ENCODE measurements at regions of chr2 and their contacts with region 1.

Region 1: DNA sequence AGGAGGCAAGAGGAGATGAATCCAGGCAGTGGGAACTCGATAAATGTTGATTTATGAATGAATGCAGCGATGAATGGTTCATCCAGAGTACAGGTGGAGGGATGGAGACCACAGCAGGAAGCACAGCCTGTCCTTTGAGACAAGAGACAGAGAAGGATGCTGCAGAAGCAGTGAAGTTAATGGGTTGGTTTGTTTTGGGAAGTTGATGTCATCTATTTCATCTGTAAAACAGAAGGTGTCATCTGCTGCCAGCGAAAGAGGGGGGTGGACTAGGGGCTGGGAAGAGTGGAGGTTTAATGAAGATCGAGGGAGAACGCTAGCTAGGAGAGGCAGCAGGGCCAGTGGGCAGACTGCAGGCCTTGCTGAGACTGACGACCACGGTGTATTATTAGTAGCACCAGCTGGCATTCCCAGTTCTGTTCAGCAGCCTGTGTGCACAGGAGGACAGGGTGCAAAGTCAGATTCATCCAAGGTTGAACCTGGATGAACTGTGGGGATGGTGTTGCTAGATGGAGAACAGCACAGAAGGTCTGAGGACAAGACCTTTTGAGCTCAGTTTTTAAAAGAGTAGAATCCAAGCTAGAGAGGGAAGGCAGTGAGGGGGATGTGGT is 120.3 kb upstream of the CAPN13 start:
- DNase-seq: no peak
- H3K4me3 ChIP-seq: no peak overlapping the region
- H3K27ac ChIP-seq: no peak overlapping the region
- H3K4me1 ChIP-seq: no peaks in the 10 kb centered on the region
- H3K27me3 ChIP-seq: no peaks in the 10 kb centered on the region
- CTCF ChIP-seq: no peak

Region 2: DNA sequence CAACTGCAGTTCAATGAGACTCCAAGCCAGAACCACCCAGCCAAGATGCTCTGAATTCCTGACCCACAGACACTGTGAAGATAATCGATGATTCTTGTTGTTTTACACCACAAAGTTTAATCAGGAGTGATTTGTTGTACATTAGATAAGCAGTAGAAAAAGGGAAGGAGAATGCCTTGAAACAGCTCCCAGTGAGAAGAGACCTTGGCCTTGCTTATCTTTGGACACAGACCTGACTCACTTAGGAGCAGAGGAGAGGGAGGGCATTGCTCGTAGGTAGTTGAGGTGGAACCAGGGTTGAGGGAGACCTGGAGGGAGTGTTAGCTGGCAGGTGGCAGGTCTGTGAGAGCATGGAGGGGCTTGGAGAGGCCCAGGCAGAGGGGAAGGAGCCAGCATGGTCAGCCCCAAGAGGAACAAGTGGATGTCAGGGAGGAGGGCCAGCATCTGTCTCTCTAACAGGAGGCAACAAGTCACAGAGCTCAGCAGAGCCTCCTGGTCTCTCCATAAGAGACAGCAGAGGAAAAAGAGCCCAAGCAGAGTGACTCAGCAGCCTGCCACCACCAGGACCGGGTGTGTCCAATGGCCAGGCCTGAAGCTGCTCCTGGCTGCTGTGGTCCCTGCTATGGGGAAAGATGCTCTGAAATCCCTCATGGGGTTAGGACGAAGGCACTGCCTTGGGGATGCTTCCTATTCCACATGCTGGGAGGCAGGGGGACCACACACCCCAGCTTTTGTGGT is 41.3 kb after region 1 on chr2:
- CTCF ChIA-PET with region 1: interaction called, 11 read pairs
- POLR2A ChIA-PET with region 1: no interaction called
- intact Hi-C with region 1: no loop called
- DNase-seq: peak in 1 of 2 experiments; percentile 7
- H3K4me3 ChIP-seq: no peak overlapping the region
- H3K27ac ChIP-seq: peak overlapping the region; percentile 71
- H3K4me1 ChIP-seq: peaks cover 18% of the 10 kb centered on the region
- H3K27me3 ChIP-seq: no peaks in the 10 kb centered on the region
- CTCF ChIP-seq: no peak

Region 3: DNA sequence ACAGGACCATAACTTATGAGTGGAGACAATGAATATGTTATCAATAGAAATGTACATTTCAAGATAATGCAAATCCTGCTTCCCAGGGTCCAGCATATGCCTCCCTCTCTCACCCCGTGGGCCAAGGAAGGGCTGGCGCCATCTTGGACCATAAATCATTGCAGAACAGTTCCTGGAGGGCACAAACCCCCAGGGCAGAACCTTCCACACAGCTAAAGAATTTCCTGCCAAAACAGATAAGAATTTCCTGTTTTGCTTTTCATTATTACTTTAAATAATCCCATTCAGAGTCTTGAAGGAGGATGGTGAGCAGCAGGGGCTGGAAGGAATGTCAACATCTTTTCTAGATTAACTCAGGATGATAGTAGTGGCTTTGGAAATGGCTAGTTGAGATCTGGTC is 360.1 kb after region 1 on chr2:
- CTCF ChIA-PET with region 1: no interaction called
- POLR2A ChIA-PET with region 1: no interaction called
- intact Hi-C with region 1: no loop called
- DNase-seq: no peak
- H3K4me3 ChIP-seq: no peak overlapping the region
- H3K27ac ChIP-seq: no peak overlapping the region
- H3K4me1 ChIP-seq: peaks cover 7% of the 10 kb centered on the region; the same call in 1 of the 2 replicates
- H3K27me3 ChIP-seq: no peaks in the 10 kb centered on the region
- CTCF ChIP-seq: no peak

Measured in PC-9 (cell line).